HEK293 (cell line): ENCODE measurements at regions of chr10 and their contacts with region 1.

Region 1: GRCh38 chr10:93482145-93482834 is at the start of gene MYOF:
- H3K4me3 ChIP-seq: peak within 1 kb of the TSS; percentile 62
- H3K27ac ChIP-seq: no peak within 1 kb of the TSS
- H3K4me1 ChIP-seq: no peaks in the 10 kb centered on the region
- CTCF ChIP-seq: no peak; the same call in 1 of the 2 replicates

Region 2: DNA sequence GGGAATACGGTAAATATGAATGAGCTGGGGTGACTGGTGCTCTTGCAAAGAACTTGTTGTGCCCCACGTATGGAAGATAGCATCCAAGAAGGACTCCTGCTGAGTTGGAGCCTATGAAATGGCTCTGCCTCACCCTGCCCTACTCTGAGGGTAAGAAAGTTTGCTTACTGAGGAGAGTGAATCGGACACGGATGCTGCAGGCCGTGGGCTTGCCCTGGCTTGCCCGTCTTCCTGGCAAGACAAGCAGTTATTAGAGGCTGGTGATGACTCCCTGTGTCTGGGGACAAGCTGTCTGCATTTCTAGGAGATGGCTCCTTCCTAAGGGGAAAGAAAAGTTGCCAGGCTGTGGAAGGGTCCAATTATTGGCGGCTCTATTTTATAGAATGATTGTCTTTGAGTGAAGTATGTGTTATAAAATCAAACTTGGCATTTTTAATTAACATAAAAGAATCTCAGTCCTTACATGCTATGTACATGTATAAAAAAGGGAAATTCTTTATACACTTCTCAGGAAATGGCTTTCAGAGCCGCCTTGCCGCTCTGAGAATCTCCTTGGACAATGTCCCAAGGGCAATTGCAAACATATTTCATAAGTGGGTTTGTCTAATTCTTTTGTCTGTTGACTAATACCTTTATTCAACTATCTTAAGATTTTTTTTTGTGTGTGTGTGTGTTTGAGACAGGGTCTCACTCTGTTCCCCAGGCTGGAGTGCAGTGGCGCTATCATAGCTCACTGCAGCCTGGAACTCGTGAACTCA is 344.0 kb before region 1 on chr10:
- CTCF ChIA-PET with region 1: no interaction called
- POLR2A ChIA-PET with region 1: no interaction called
- H3K4me3 ChIP-seq: no peak overlapping the region
- H3K27ac ChIP-seq: no peak overlapping the region
- H3K4me1 ChIP-seq: no peaks in the 10 kb centered on the region
- CTCF ChIP-seq: no peak

Region 3: GRCh38 chr10:93309062-93309461 is 173.2 kb before region 1 on chr10:
- CTCF ChIA-PET with region 1: no interaction called
- POLR2A ChIA-PET with region 1: no interaction called
- H3K4me3 ChIP-seq: no peak overlapping the region
- H3K27ac ChIP-seq: no peak overlapping the region
- H3K4me1 ChIP-seq: no peaks in the 10 kb centered on the region
- CTCF ChIP-seq: no peak

Region 4: GRCh38 chr10:93406364-93407145 is 75.7 kb before region 1 on chr10:
- CTCF ChIA-PET with region 1: interaction called, 12 read pairs
- POLR2A ChIA-PET with region 1: no interaction called
- H3K4me3 ChIP-seq: no peak overlapping the region
- H3K27ac ChIP-seq: no peak overlapping the region
- H3K4me1 ChIP-seq: no peaks in the 10 kb centered on the region
- CTCF ChIP-seq: no peak

Region 5: DNA sequence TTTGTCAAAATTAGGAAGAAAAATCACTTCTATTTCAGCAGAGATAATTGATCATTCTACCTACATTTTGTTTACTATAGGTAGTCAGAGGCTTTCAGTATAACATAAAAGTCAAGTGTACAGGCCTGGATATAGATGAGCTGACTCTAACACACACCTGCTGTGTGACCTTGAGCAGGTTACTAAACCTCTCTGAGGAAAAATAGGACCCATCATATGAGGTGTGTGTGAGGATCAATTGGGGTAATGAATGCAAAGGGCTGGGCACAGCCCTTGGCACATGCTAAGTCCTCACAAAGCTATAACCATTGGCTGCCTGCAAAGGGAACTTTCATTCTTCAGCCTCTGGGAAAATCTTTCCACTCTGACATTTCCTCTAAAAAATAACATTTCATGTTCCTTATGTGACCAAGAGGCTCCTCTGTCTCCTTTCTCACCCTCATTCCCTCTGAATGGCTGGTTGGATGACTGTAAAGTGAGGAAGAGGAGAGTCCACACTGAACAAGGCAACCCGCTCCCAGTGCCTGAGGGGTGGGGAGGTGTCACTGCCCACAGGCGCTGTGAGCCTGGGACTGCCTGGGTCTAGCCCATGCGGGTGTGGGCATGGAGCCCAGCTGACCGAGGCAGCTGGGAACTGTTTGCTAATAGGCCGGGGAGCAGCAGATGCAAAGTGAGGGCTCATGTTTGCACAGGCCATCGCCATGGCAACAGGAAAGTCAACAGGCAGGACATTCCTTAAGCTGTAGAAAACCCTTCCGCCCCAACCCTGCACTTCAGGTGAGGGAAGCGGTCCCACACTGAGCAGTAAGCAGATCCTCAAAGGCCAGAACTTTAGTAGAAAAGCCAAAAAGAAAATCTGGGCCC is 37.0 kb before region 1 on chr10:
- CTCF ChIA-PET with region 1: interaction called, 19 read pairs
- POLR2A ChIA-PET with region 1: interaction called, 7 read pairs
- H3K4me3 ChIP-seq: no peak overlapping the region
- H3K27ac ChIP-seq: no peak overlapping the region
- H3K4me1 ChIP-seq: peaks cover 4% of the 10 kb centered on the region; the same call in 1 of the 2 replicates
- CTCF ChIP-seq: no peak

Region 6: GRCh38 chr10:93471110-93471651 is 11.1 kb before region 1 on chr10:
- CTCF ChIA-PET with region 1: interaction called, 13 read pairs
- POLR2A ChIA-PET with region 1: interaction called, 3 read pairs
- H3K4me3 ChIP-seq: no peak overlapping the region
- H3K27ac ChIP-seq: no peak overlapping the region
- H3K4me1 ChIP-seq: no peaks in the 10 kb centered on the region
- CTCF ChIP-seq: no peak

Region 7: DNA sequence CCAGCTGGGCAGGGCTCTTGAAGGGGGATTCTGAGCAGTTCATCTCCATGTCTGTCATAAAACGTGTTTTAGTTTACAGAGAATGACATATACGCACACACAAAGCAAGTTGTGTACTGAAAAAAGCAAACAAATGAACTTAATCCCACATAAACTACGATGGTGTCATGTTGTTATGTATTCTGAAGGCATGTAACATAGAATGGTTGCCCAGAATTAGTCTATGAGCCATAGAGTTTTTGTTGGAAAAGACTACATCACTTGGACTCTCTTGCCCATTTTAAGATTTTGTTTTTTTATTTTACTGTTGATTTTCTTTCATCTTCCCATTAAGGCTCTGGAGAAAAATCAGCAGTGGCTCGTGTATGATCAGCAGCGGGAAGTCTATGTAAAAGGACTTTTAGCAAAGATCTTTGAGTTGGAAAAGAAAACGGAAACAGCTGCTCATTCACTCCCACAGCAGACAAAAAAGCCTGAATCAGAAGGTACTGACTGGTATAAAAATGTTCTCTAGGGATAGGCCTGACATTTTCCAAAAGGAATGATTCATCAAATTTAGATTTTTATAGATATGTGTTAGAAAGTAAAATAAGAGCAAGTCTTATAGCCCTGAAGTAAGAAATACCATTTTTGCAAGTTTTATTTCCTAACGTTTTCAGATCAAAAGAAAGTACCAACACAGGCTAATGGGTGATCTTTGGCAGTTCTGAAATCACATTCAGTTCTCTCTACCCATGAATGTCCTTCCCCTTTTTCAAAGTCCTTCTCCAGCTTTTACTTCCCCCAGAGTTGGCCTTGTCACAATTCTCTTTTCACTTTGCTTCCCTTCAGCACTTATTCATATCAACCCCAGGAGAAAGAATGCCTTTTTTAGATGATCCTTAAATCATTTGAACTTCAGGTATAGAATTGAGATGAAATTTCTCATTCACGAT is 33.0 kb after region 1 on chr10:
- CTCF ChIA-PET with region 1: interaction called, 84 read pairs
- POLR2A ChIA-PET with region 1: no interaction called
- H3K4me3 ChIP-seq: no peak overlapping the region
- H3K27ac ChIP-seq: no peak overlapping the region
- H3K4me1 ChIP-seq: no peaks in the 10 kb centered on the region
- CTCF ChIP-seq: no peak